ENCODE measurements at regions of chr5 and their contacts with region 1.

Region 1: DNA sequence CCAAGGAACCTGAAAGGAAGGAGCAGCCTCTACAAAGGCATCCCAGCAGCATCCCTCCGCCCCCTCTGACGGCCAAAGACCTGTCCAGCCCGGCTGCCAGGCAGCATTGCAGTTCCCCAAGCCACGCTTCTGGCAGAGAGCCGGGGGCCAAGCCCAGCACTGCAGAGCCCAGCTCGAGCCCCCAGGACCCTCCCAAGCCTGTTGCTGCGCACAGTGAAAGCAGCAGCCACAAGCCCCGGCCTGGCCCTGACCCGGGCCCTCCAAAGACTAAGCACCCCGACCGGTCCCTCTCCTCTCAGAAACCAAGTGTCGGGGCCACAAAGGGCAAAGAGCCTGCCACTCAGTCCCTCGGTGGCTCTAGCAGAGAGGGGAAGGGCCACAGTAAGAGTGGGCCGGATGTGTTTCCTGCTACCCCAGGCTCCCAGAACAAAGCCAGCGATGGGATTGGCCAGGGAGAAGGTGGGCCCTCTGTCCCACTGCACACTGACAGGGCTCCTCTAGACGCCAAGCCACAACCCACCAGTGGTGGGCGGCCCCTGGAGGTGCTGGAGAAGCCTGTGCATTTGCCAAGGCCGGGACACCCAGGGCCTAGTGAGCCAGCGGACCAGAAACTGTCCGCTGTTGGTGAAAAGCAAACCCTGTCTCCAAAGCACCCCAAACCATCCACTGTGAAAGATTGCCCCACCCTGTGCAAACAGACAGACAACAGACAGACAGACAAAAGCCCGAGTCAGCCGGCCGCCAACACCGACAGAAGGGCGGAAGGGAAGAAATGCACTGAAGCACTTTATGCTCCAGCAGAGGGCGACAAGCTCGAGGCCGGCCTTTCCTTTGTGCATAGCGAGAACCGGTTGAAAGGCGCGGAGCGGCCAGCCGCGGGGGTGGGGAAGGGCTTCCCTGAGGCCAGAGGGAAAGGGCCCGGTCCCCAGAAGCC is 30.8 kb downstream of the CD180 start:
- DNase-seq: peak; percentile 54 to 88 (median 79)
- ATAC-seq: peak; percentile 75 to 90
- H3K4me3 Mint-ChIP-seq: peak overlapping the region; percentile 75 to 94 (median 88)
- H3K27ac Mint-ChIP-seq: peak overlapping the region; percentile 95 to 99 (median 99)
- H3K4me1 Mint-ChIP-seq: peaks cover 24 to 77% (median 68%) of the 10 kb centered on the region in 4 donors
- H3K27me3 Mint-ChIP-seq: no peaks in the 10 kb centered on the region

Region 2: DNA sequence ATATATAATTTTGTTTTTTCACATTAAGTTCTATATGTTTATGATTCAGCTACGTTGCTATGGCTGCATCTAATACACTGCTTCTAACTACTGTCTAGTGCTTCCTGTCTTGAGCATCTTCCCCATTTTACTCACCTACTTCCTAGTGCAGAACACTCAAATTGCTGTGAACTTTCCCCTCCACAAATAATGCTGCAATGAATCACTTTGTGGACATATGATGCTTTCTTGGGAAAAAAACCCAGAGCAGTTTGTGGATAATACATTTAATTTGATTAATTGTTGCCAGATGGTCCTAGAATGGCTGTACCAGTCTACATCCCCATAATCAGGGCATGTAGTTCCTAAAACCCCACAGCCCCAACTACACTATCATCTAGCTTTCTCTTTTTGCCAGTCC is 12.3 kb after region 1 on chr5:
- POLR2A ChIA-PET with region 1: interaction called, 12 read pairs
- DNase-seq: no peak
- ATAC-seq: no peak
- H3K4me3 Mint-ChIP-seq: no peak overlapping the region
- H3K27ac Mint-ChIP-seq: peak overlapping the region in 2 of 10 donors; percentile 48 to 53
- H3K4me1 Mint-ChIP-seq: peaks cover 29 to 62% (median 41%) of the 10 kb centered on the region in 4 donors
- H3K27me3 Mint-ChIP-seq: no peaks in the 10 kb centered on the region

Region 3: GRCh38 chr5:67196537-67197059 is 30.8 kb after region 1 on chr5 and contains the start of gene CD180:
- POLR2A ChIA-PET with region 1: interaction called, 420 read pairs
- DNase-seq: no peak
- ATAC-seq: peak in 1 of 2 donors; percentile 32
- H3K4me3 Mint-ChIP-seq: peak within 1 kb of the TSS in 2 of 10 donors; percentile 44 to 86
- H3K27ac Mint-ChIP-seq: peak within 1 kb of the TSS in 6 of 10 donors; percentile 41 to 93 (median 72)
- H3K4me1 Mint-ChIP-seq: peaks cover 21 to 89% (median 53%) of the 10 kb centered on the region in 4 donors
- H3K27me3 Mint-ChIP-seq: no peaks in the 10 kb centered on the region
- polyA plus RNA-seq, gene CD180: 0.03 to 0.08 TPM in 2 of 3 donors, not detected in the other

Region 4: GRCh38 chr5:67209142-67209771 is 43.5 kb after region 1 on chr5:
- POLR2A ChIA-PET with region 1: interaction called, 420 read pairs
- DNase-seq: peak in 9 of 10 donors; percentile 34 to 81 (median 64)
- ATAC-seq: peak; percentile 45 to 50
- H3K4me3 Mint-ChIP-seq: peak overlapping the region in 4 of 10 donors; percentile 2 to 63 (median 41)
- H3K27ac Mint-ChIP-seq: peak overlapping the region; percentile 9 to 93 (median 87)
- H3K4me1 Mint-ChIP-seq: peaks cover 43 to 61% (median 59%) of the 10 kb centered on the region in 4 donors
- H3K27me3 Mint-ChIP-seq: no peaks in the 10 kb centered on the region

Region 5: DNA sequence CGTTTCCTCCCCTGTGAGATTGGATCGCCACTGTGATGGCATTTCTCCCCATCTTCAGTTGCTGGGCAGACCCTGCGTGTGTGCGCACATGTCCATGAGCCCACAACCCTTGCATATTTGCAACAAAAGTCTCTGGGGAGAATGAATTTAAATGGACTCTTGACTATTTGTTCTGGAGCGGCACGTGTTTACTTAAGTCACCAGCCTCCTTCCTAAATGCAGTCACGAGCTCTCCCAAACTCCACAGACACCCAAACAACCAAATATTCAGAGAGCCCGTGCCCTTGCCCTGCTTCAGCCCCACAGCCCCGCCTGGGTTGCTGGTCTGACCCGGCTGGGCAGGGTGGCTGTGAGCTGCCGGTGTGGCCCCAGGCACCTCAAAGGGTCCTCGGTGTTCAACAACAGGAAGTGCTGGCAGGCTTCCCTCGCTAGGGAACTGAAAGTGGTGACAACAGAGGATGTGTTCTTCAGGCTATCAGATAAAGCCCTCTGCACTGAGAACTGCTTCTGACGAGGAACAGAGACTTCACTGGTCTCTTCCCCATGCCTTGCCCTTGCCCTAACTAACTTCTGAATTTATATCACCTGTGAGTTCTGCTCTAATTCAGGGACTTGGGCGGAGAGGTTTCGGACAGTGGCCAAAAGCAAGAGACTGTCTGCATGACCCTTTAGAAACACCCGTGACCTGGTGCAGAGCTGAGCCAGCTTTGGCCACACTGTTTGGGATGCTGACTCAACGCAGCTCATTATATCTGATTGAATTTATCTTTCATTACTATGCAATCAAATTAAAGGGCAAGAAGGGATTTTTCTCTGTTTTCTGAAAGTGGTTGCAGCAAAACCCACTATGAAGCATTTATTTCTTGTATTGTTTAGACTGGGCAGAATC is 50.0 kb after region 1 on chr5:
- POLR2A ChIA-PET with region 1: interaction called, 420 read pairs
- DNase-seq: peak; percentile 46 to 86 (median 72)
- ATAC-seq: peak; percentile 97
- H3K4me3 Mint-ChIP-seq: peak overlapping the region; percentile 55 to 87 (median 80)
- H3K27ac Mint-ChIP-seq: peak overlapping the region; percentile 96 to 99 (median 98)
- H3K4me1 Mint-ChIP-seq: peaks cover 48 to 61% (median 59%) of the 10 kb centered on the region in 4 donors
- H3K27me3 Mint-ChIP-seq: no peaks in the 10 kb centered on the region